CD4-positive, alpha-beta T cell (primary cell): ENCODE measurements at regions of chr18 and their contacts with region 1.

Region 1: DNA sequence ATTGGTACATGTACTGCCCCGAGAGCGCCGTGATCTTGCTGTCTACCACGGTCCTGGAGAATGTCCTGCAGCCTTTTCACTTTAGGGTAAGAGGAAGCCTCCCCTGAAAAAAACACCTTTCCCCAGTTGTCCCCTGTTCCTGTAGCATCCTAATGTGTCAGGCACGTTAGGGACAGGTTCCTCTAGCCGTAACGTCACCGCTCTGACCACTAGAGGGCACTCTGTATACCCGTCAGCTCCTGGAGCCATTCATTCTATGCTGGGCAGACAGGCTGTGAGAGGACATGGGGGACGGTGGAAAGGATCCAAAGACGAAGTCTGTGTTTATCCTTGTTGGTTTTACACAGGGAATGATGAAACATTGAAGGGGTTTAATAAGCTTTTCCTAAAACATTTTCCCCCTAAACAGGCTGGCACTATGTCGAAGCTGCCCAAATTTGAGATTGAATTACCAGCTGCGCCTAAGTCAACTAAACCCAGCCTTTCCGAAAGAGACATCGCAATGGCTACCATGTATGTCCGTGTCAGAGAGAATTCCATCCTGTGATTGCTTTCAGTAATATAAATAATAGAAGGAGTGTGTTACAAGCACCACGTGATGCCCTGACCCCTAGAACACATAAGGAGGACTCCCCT is 12.7 kb downstream of the RMC1 start:
- DNase-seq: peak; percentile 64 to 88 (median 66)
- ATAC-seq: peak; percentile 99
- H3K4me3 ChIP-seq: no peak overlapping the region
- H3K4me3 Mint-ChIP-seq: no peak overlapping the region
- H3K27ac ChIP-seq: no peak overlapping the region
- H3K27ac Mint-ChIP-seq: peak overlapping the region; percentile 28
- H3K4me1 ChIP-seq: peaks cover 10% of the 10 kb centered on the region
- H3K4me1 Mint-ChIP-seq: peaks cover 24% of the 10 kb centered on the region
- H3K27me3 ChIP-seq: no peaks in the 10 kb centered on the region
- H3K27me3 Mint-ChIP-seq: no peaks in the 10 kb centered on the region
- CTCF ChIP-seq: peak; percentile 87

Region 2: DNA sequence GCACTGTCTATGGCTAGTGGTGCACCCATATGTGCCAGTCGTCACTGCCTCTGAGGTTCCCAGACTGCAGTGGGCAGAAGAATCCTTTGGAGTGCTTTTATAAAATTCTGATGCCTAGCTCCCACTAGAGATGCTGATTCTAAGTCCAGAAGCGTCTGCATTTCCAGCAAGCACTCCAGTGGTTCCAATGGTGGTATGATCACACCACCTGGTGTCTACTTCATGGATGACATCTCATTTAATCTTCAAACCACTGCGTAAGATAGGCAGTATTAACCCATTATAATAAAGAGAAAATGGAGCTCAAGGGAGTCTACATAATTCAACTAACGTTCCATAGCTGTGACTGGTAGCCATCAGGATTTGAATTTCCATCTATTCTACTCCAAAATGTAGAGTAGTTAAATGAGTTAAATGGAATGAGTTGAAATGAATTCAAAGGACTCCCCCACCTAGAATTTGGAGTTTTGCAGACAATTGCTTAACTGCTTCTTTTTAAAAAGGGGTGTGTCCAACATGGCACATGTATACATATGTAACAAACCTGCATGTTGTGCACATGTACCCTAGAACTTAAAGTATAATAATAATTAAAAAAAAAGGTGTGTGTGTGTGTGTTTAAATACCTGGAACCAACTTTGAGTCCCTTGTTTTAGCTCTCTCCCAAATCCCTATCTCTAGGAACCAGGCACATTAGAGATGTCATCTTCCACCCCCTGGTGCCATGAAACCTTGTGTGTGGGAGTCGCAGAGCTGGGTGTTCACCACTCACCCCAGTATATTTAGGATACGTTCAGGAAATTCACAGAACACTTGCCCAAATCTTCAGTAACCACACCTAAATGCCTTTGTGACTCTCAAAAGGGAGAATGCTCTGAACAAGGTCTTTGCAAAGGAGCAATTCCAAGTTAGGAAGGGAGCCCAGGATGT is 187.3 kb after region 1 on chr18:
- CTCF ChIA-PET with region 1: no interaction called
- POLR2A ChIA-PET with region 1: no interaction called
- intact Hi-C with region 1: loop called in 1 of 2 experiments (anchors 5 kb)
- DNase-seq: peak in 5 of 14 experiments; percentile 12 to 72 (median 61)
- ATAC-seq: peak; percentile 88
- H3K4me3 ChIP-seq: no peak overlapping the region
- H3K4me3 Mint-ChIP-seq: no peak overlapping the region
- H3K27ac ChIP-seq: no peak overlapping the region
- H3K27ac Mint-ChIP-seq: no peak overlapping the region
- H3K4me1 ChIP-seq: no peaks in the 10 kb centered on the region
- H3K4me1 Mint-ChIP-seq: no peaks in the 10 kb centered on the region
- H3K27me3 ChIP-seq: peaks cover 6 to 14% of the 10 kb centered on the region in 2 experiments
- H3K27me3 Mint-ChIP-seq: peaks cover 32% of the 10 kb centered on the region
- CTCF ChIP-seq: peak; percentile 56

Region 3: GRCh38 chr18:23812546-23813440 is 296.8 kb after region 1 on chr18:
- CTCF ChIA-PET with region 1: no interaction called
- POLR2A ChIA-PET with region 1: no interaction called
- intact Hi-C with region 1: loop called (anchors 5 kb)
- DNase-seq: peak in 3 of 14 experiments; percentile 47 to 57 (median 49)
- ATAC-seq: peak; percentile 49
- H3K4me3 ChIP-seq: no peak overlapping the region
- H3K4me3 Mint-ChIP-seq: no peak overlapping the region
- H3K27ac ChIP-seq: no peak overlapping the region
- H3K27ac Mint-ChIP-seq: no peak overlapping the region
- H3K4me1 ChIP-seq: peaks cover 9% of the 10 kb centered on the region
- H3K4me1 Mint-ChIP-seq: peaks cover 11% of the 10 kb centered on the region
- H3K27me3 ChIP-seq: no peaks in the 10 kb centered on the region
- H3K27me3 Mint-ChIP-seq: no peaks in the 10 kb centered on the region
- CTCF ChIP-seq: peak; percentile 63